ENCODE measurements at regions of chr16 and their contacts with region 1.

Region 1: DNA sequence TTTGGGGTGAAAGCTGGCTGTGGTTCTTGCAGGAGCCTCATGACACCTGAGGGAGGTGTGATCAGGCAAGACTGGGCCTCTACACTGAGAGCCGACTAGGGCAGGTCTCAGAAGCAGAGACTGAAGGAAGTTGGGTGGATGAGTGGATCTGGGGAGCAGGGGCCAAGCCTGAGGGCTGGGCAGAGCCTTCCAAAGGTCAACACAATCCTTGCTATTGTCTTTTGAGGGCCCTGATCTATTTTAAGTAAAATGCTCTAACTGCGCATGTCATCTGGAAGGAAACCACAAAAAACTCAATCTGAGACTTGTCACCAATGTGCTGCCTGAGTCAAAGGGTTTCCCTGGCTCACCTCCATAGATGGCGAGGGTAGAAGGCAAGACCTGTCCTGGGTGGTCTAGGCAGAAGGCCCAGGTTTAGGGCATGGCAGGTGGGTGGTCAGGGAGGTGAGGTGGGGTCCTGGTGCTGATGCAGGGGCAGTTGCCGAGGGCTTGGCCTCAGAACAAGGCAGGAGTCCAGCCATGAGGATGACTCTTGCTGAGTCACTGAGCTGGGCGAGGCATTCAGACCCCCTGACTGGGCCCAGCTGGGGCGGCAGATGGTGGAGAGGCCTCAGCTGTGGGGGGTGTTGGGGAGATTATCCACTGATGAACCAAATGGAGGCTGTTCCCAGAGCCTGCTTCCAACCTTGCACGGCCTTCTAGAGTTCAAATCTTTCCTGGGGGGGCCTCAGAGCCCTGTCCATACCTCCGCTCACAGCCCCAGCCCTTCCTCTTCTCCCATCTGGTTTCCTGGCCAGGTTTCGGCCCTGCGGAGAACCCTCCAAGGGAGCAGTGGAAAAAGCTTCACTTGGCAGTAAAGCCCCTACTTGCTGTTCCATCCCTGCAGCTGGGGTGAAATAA is 5.1 kb downstream of the MVP start:
- DNase-seq: peak; percentile 47
- H3K4me3 Mint-ChIP-seq: peak overlapping the region; percentile 47
- H3K27ac Mint-ChIP-seq: peak overlapping the region; percentile 75
- H3K4me1 Mint-ChIP-seq: peaks cover 12% of the 10 kb centered on the region
- H3K27me3 Mint-ChIP-seq: no peaks in the 10 kb centered on the region
- CTCF ChIP-seq: no peak

Region 2: DNA sequence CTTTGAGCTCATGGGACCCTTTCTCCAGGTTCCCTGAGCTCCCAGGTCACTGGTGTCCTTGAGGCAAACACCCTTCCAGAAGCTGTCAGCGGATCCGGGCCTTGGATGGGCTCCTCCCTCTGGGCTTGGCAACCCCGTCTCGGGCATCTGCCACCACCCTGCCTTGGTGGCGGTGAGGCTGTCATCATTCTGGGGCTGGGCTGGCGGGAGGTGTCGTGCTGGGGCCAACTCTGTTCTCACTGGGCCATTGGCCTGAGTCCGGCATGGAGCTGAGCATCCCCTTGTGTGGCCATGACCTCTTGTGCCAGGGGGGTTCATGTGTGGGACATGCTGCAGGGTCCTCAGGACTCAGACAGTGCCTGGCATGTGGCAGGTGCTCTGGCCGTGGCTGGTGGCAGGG is 642.9 kb before region 1 on chr16:
- CTCF ChIA-PET with region 1: no interaction called
- POLR2A ChIA-PET with region 1: no interaction called
- intact Hi-C with region 1: no loop called
- DNase-seq: no peak
- H3K4me3 Mint-ChIP-seq: no peak overlapping the region
- H3K27ac Mint-ChIP-seq: no peak overlapping the region
- H3K4me1 Mint-ChIP-seq: no peaks in the 10 kb centered on the region
- H3K27me3 Mint-ChIP-seq: no peaks in the 10 kb centered on the region
- CTCF ChIP-seq: no peak

Region 3: GRCh38 chr16:29678691-29679267 is 146.6 kb before region 1 on chr16 and contains the start of gene QPRT:
- CTCF ChIA-PET with region 1: no interaction called
- POLR2A ChIA-PET with region 1: no interaction called
- intact Hi-C with region 1: no loop called
- DNase-seq: no peak
- H3K4me3 Mint-ChIP-seq: no peak within 1 kb of the TSS
- H3K27ac Mint-ChIP-seq: no peak within 1 kb of the TSS
- H3K4me1 Mint-ChIP-seq: peaks cover 5% of the 10 kb centered on the region
- H3K27me3 Mint-ChIP-seq: no peaks in the 10 kb centered on the region
- CTCF ChIP-seq: no peak
- total RNA-seq, gene QPRT: not detected in 2 replicates

Region 4: GRCh38 chr16:29784157-29784556 is 41.2 kb before region 1 on chr16:
- CTCF ChIA-PET with region 1: no interaction called
- POLR2A ChIA-PET with region 1: no interaction called
- intact Hi-C with region 1: no loop called
- DNase-seq: no peak
- H3K4me3 Mint-ChIP-seq: no peak overlapping the region
- H3K27ac Mint-ChIP-seq: no peak overlapping the region
- H3K4me1 Mint-ChIP-seq: peaks cover 4% of the 10 kb centered on the region
- H3K27me3 Mint-ChIP-seq: no peaks in the 10 kb centered on the region
- CTCF ChIP-seq: no peak

Region 5: DNA sequence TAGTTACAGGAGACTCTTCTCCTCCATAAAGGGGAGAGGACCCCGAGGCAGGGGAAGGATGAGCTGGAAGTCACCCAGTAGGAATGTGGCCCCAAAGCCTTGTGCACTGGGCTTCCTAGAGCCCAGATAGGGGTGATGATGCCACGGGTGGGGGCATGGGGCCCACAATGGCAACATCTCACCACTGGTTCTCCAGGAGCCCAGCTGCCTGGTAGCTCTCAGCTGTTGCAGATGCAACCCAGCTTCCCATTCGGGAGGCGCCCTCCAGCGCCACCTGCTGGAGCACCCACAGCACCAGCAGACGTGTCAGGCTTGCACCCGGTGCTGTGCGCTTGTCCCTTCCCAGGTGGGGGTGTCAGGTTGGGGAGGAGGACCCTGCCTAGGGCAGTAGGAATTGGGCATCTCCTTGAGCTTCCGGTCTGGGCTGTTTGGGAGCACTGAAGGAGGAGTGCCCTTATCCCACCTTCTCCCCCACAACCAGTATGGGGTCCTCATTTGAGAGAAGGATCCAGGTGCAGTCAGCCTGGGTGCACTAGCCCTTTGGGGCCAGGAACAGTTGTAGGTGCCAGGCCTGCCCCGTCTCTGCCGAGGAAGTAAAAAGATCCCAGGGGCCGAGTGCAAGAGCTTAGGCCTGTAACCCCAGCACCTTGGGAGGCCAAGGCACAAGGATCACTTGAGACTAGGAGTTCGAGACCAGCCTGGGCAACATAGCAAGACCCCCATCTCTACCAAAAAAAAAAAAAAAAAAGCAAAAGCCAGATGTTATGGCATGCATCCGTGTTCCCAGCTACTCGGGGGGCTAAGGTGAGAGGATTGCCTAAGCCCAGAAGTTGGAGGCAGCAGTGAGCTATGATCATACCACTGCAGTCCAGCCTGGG is 23.3 kb after region 1 on chr16:
- CTCF ChIA-PET with region 1: interaction called, 52 read pairs
- POLR2A ChIA-PET with region 1: interaction called, 20 read pairs
- intact Hi-C with region 1: no loop called
- DNase-seq: peak; percentile 73
- H3K4me3 Mint-ChIP-seq: no peak overlapping the region
- H3K27ac Mint-ChIP-seq: no peak overlapping the region
- H3K4me1 Mint-ChIP-seq: no peaks in the 10 kb centered on the region
- H3K27me3 Mint-ChIP-seq: no peaks in the 10 kb centered on the region
- CTCF ChIP-seq: peak; percentile 90

Measured in MCF 10A (cell line).